Right ventricle myocardium superior (tissue), 1 donor: ENCODE measurements at regions of chr12 and their contacts with region 1.

Region 1: GRCh38 chr12:27290501-27291168 is 42.0 kb upstream of the BMAL2 start:
- DNase-seq: no peak
- ATAC-seq: no peak

Region 2: DNA sequence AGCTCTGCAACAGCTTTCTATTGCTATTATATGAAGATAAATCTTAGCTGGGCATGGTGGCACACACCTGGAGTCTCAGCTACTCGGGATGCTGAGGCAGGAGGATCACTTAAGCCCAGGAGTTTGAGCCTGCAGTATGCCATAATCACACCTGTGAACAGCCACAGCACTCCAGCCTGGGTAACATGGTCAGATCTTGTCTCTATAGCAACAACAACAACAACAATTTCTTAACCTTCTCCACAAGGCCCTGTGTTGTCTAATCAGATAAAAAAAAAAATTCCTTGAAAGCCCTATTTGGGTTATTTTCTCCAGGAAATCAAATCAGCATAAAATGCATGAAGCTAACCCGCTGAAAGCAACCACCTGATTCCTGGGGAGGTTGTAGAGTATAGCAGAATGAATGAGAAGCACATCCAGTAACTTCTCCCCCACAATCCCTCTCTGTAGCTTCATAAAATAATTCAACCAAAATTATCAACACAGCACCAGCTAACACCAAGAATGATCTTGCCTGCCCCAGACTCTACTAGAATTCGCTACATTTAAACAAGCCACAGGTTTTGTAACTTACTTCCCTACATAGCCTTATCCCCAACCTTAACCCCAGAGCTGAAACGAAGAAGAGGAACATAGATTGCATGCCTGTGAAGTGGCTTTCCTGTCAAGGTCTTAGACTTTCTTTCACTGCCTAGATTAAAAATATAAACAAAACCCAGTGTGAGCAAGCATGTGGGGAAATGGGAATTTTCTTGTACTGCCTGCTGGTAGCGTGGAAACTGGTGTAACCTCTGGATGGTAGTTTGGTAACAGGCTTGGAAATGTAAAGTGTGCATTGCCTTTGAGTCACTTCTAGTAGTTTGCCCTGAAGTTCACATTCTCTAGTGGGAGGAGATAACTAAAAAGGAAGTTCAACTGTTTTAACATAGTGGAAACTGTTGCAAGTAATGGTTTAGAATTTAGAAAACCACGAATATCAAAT is 52.6 kb before region 1 on chr12:
- intact Hi-C with region 1: no loop called
- DNase-seq: no peak
- ATAC-seq: peak; percentile 68

Region 3: GRCh38 chr12:27272701-27273028 is 18.0 kb before region 1 on chr12:
- intact Hi-C with region 1: loop called (anchors 2 kb)
- DNase-seq: no peak
- ATAC-seq: peak; percentile 33